Panc1 (cell line): ENCODE measurements at regions of chr15 and their contacts with region 1.

Region 1: GRCh38 chr15:43225201-43225949 is 4.6 kb upstream of the EPB42 start:
- DNase-seq: peak; percentile 45
- ATAC-seq: peak; percentile 95
- H3K4me3 ChIP-seq: no peak overlapping the region
- H3K27ac ChIP-seq: no peak overlapping the region
- H3K4me1 ChIP-seq: no peaks in the 10 kb centered on the region
- H3K27me3 ChIP-seq: peaks cover 7% of the 10 kb centered on the region
- CTCF ChIP-seq: peak; percentile 87

Region 2: DNA sequence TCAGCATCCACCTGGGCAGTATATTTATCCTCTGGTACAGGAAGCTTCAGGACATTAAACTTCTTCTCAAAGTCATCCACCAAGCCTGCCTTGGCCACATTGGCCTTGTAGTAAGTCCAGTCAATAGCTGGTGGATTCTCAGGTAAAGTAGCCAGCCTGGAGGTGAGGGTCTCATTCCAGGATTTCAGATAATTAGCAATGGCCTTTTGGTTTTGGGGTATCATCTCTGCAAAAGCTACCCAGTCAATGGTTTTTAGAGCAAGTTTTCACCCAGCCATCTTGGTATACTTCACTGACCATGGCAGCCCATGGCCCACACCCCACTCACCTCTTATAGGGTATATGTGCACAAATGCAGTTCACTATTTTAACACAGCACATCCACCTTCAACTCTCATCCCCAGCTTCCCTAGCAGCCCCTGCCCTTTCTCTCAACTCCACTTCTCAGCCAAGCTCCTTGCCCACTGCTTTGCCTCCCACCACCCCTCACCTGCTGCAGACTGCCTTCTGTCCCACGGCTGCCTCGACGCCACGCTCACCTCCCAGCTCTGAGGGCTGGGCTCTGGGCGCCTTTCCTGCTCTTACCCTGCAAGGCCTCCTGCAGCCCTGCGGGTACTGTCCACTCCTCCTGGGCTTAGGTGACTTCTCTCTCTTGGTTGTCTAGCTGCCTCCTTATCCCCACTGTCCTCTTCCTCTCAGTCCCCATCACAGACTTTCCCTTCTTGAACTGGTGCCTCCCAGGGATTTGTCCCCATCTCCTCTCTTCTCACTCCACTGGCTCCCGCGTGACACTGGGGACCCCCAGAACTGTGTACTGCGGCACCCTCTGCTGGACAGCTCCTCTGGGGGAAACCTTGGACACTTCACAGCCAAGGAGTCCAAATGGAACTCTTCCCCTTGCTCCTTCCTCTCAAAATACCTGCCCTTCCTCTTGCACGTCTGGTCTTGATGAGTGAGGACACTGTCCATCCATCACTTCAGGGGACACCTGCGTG is 43.0 kb after region 1 on chr15:
- CTCF ChIA-PET with region 1: interaction called, 7 read pairs
- POLR2A ChIA-PET with region 1: interaction called, 11 read pairs
- in situ Hi-C with region 1: no loop called
- intact Hi-C with region 1: no loop called
- DNase-seq: no peak
- ATAC-seq: no peak
- H3K4me3 ChIP-seq: no peak overlapping the region
- H3K27ac ChIP-seq: no peak overlapping the region
- H3K4me1 ChIP-seq: no peaks in the 10 kb centered on the region
- H3K27me3 ChIP-seq: peaks cover 18% of the 10 kb centered on the region
- CTCF ChIP-seq: no peak

Region 3: GRCh38 chr15:43285609-43286037 is 60.2 kb after region 1 on chr15:
- CTCF ChIA-PET with region 1: interaction called, 49 read pairs
- POLR2A ChIA-PET with region 1: interaction called, 4 read pairs
- in situ Hi-C with region 1: no loop called
- intact Hi-C with region 1: loop called (anchors 1 kb)
- DNase-seq: peak; percentile 67
- ATAC-seq: peak; percentile 75
- H3K4me3 ChIP-seq: peak overlapping the region in 1 of 2 experiments; percentile 23; a peak in 2 of 4 replicates
- H3K27ac ChIP-seq: no peak overlapping the region
- H3K4me1 ChIP-seq: no peaks in the 10 kb centered on the region; the same call in 1 of the 2 replicates
- H3K27me3 ChIP-seq: no peaks in the 10 kb centered on the region
- CTCF ChIP-seq: peak; percentile 88